ENCODE measurements at regions of chr12 and their contacts with region 1.

Region 1: DNA sequence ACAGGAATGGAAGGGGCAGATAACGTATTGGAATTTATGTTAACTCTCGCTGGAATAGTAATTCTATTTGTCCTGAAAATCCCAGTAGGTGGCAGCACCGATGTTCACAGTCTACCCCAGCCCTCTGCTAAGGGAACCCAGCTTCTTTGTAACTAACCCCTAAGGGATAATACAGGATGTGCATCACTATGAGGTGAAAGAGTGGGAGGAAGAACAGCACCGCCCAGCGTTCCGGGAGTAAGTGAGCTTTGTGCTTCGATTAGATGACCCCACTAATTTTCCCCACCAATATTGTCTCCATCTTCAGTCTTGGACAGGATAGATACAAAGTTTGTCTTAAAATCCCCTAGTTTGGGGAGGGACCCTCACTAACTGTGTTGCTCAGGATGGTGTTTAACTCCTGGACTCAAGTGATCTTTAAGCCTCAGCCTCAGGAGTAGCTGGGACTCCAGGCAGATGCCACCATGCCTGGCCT is 2.7 kb downstream of the SLC2A3 start:
- DNase-seq: peak; percentile 85
- ATAC-seq: peak; percentile 76
- H3K4me3 Mint-ChIP-seq: no peak overlapping the region
- H3K27ac Mint-ChIP-seq: no peak overlapping the region
- H3K4me1 Mint-ChIP-seq: peaks cover 34% of the 10 kb centered on the region
- H3K27me3 Mint-ChIP-seq: no peaks in the 10 kb centered on the region

Region 2: DNA sequence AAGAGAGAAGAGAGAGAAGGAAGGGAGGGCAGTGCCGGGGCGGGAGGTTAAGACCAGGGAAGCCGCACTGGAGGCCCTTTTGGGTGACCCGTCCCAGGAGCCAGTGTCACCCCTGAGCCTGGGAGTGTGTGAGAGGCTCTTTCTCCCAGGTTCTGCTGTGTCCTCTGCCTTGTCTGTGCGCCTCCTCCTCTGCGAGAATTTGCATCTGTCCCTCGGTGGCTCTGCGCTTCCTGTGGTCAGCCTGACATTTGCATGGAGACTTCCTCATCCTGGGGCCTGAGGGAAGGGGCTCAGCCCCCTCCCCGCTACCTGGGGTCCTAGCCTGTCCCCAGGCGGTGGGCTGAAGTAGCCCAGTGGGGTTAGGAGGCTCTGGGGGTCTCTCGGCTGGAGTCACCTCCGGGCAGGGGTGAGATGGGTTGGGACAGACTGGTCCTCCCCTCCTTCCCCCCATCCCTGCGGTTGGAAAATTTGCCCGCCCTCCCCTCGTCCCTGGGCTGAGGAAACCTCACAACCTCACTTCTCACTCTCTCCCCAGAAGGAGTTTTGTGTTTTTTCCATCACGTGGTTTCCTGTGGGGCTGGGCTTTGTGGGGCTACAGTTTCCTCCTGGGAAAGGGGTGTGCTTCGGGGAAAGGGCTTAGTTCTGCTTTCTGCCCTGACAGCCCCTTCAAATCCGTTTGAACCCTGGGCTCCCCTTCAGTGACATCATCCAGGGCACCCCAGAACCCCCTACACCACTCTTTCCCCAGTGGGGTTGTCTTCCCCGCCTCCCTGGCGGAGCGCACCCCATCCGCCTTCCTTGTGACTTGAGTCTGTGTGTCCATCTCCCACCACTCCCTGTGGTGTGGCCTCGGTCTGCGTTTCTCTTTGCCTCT is 979.6 kb before region 1 on chr12:
- CTCF ChIA-PET with region 1: no interaction called
- POLR2A ChIA-PET with region 1: no interaction called
- intact Hi-C with region 1: loop called in 1 of 2 experiments (anchors 10 kb)
- DNase-seq: peak; percentile 87
- ATAC-seq: peak; percentile 33
- H3K4me3 Mint-ChIP-seq: peak overlapping the region; percentile 95
- H3K27ac Mint-ChIP-seq: peak overlapping the region; percentile 97
- H3K4me1 Mint-ChIP-seq: peaks cover 70% of the 10 kb centered on the region
- H3K27me3 Mint-ChIP-seq: no peaks in the 10 kb centered on the region

Region 3: GRCh38 chr12:7892186-7892980 is 40.9 kb before region 1 on chr12:
- CTCF ChIA-PET with region 1: no interaction called
- POLR2A ChIA-PET with region 1: no interaction called
- intact Hi-C with region 1: no loop called
- DNase-seq: no peak
- ATAC-seq: no peak
- H3K4me3 Mint-ChIP-seq: no peak overlapping the region
- H3K27ac Mint-ChIP-seq: no peak overlapping the region
- H3K4me1 Mint-ChIP-seq: no peaks in the 10 kb centered on the region
- H3K27me3 Mint-ChIP-seq: peaks cover 2% of the 10 kb centered on the region

Region 4: GRCh38 chr12:7915559-7916403 is 17.5 kb before region 1 on chr12:
- CTCF ChIA-PET with region 1: interaction called, 14 read pairs
- POLR2A ChIA-PET with region 1: interaction called, 6 read pairs
- intact Hi-C with region 1: no loop called
- DNase-seq: peak; percentile 65
- ATAC-seq: peak; percentile 62
- H3K4me3 Mint-ChIP-seq: no peak overlapping the region
- H3K27ac Mint-ChIP-seq: no peak overlapping the region
- H3K4me1 Mint-ChIP-seq: peaks cover 24% of the 10 kb centered on the region
- H3K27me3 Mint-ChIP-seq: no peaks in the 10 kb centered on the region

Region 5: GRCh38 chr12:7970475-7971252 is 37.4 kb after region 1 on chr12:
- CTCF ChIA-PET with region 1: interaction called, 210 read pairs
- POLR2A ChIA-PET with region 1: interaction called, 21 read pairs
- intact Hi-C with region 1: loop called (anchors 1 kb)
- DNase-seq: peak; percentile 94
- ATAC-seq: peak; percentile 81
- H3K4me3 Mint-ChIP-seq: peak overlapping the region; percentile 80
- H3K27ac Mint-ChIP-seq: peak overlapping the region; percentile 99
- H3K4me1 Mint-ChIP-seq: peaks cover 31% of the 10 kb centered on the region
- H3K27me3 Mint-ChIP-seq: no peaks in the 10 kb centered on the region

Region 6: GRCh38 chr12:7995266-7995963 is 62.1 kb after region 1 on chr12:
- CTCF ChIA-PET with region 1: interaction called, 70 read pairs
- POLR2A ChIA-PET with region 1: interaction called, 11 read pairs
- intact Hi-C with region 1: loop called (anchors 1 kb)
- DNase-seq: peak; percentile 93
- ATAC-seq: peak; percentile 80
- H3K4me3 Mint-ChIP-seq: no peak overlapping the region
- H3K27ac Mint-ChIP-seq: no peak overlapping the region
- H3K4me1 Mint-ChIP-seq: peaks cover 23% of the 10 kb centered on the region
- H3K27me3 Mint-ChIP-seq: no peaks in the 10 kb centered on the region

Region 7: DNA sequence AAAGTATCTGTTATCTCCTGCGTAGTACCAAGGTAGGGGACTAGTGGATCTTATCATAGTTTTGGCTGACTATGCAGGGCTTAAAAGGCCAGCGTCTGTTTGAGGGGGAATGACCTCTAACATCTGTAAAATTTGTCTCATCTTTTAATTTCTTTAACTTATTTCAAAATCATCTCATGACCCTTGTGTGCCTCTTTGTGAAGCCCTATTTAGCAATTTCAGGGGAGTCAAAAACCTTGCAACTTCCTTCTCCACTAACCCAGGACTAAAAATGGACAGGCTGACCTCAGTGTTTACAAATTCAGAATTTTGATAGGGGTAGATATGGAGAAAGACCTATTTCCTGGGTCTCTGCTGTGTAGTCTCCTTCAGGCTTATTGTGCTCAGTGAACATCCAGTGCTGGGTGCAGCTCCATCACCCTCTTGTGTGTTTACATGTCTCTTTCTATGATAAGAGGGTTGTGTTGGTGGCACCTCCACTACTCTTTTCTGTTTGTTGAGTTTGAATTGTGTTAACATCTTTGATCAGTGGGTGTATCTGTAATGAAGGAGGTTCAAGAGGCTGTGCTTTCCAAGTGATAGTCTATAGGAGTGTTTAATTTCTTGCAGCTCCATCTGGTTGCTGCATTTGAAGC is 163.1 kb after region 1 on chr12:
- CTCF ChIA-PET with region 1: no interaction called
- POLR2A ChIA-PET with region 1: no interaction called
- intact Hi-C with region 1: no loop called
- DNase-seq: no peak
- ATAC-seq: no peak
- H3K4me3 Mint-ChIP-seq: no peak overlapping the region
- H3K27ac Mint-ChIP-seq: no peak overlapping the region
- H3K4me1 Mint-ChIP-seq: peaks cover 10% of the 10 kb centered on the region
- H3K27me3 Mint-ChIP-seq: no peaks in the 10 kb centered on the region

Region 8: GRCh38 chr12:9760699-9761418 is 1827.6 kb after region 1 on chr12 and contains the start of gene CD69:
- CTCF ChIA-PET with region 1: no interaction called
- POLR2A ChIA-PET with region 1: no interaction called
- intact Hi-C with region 1: loop called in 1 of 2 experiments (anchors 5 kb)
- DNase-seq: peak; percentile 87
- ATAC-seq: peak; percentile 55
- H3K4me3 Mint-ChIP-seq: peak within 1 kb of the TSS; percentile 99
- H3K27ac Mint-ChIP-seq: peak within 1 kb of the TSS; percentile 100
- H3K4me1 Mint-ChIP-seq: peaks cover 49% of the 10 kb centered on the region
- H3K27me3 Mint-ChIP-seq: no peaks in the 10 kb centered on the region
- total RNA-seq, gene CD69: 97.9 to 127 TPM